Prostate gland (tissue), 2 donors: ENCODE measurements at regions of chr14 and their contacts with region 1.

Region 1: DNA sequence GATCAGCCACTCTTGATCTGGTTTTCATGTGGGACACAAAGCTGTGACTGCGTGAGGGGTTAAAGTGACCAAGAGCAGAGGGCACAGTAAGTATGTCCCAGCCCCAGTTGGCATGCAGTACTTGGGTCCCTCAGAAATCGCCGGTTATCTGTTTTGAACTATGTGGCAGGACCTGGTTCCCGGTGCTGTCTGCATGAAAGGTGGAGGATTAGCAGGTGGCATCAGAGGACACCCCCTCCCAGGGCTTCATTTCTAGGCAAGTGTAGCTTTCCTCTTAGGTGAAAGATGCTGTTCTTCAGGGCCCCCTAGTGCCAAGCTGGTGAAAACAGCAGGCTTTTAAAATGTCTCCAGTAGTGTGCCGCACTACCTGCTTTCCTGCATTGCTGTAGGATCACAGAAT is 57.1 kb downstream of the ATG14 start:
- DNase-seq: peak; percentile 65
- H3K4me3 ChIP-seq: no peak overlapping the region
- H3K27ac ChIP-seq: peak overlapping the region; percentile 4 to 36
- H3K4me1 ChIP-seq: no peaks in the 10 kb centered on the region
- H3K27me3 ChIP-seq: no peaks in the 10 kb centered on the region
- CTCF ChIP-seq: peak; percentile 35 to 84 (median 64)
- POLR2A ChIP-seq: no peak

Region 2: DNA sequence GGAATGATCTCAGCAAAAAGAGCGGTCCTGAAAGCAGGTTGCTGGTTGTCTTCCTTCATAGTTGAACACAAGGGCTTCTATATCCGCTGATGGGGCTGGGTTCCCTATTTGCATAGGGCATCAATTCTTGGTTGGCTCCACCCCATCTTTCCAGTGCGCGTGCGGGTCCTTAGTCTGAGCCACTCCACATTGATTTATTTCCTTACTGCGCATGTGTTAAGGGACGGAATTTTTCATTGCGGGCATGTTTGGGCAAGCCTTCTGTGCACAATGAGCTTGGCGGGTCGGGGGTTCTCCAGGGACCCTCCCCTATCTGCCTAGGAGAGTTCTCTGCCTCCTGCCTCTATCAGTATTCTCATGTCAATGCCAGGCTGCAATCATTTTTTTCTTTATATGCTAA is 141.9 kb before region 1 on chr14:
- intact Hi-C with region 1: loop called (anchors 5 kb)
- DNase-seq: no peak
- H3K4me3 ChIP-seq: no peak overlapping the region
- H3K27ac ChIP-seq: no peak overlapping the region
- H3K4me1 ChIP-seq: no peaks in the 10 kb centered on the region
- H3K27me3 ChIP-seq: no peaks in the 10 kb centered on the region
- CTCF ChIP-seq: no peak
- POLR2A ChIP-seq: no peak

Region 3: DNA sequence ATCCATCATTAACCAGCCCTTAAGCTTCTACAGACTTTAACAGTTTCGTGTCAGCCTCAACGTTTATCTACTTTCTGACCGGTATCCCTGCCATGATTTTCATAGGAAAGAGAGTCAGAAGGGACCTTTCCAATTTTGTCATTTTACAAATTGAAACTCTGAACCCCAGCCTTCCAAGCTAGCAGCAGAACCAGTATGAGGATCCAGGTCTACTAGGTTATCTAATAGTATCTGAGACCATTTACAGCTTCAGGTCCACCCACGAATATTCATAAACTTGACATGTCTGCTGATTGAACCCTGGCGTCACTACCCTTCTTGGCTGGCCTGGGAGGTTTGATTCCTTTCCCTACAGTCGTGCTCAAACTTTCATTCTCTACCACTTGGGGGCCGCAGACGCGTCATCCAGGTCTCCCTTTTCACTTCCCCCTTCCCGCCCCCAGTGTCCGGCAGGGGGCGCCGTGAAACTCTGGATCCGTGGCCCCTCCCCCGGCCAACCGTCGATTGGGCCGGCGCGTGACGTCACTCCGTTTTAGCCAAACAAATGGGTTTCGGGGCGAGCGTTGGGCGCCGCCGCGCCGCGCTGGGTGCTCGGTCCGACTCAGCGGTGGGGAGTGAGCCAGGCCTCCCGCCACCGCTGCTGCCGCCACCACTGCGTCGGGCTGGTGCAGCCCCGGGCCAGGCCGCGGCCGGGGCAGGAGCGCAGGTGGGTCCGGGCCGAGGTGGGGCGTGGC is 83.5 kb before region 1 on chr14 and contains the start of gene FBXO34:
- intact Hi-C with region 1: loop called (anchors 2 kb)
- DNase-seq: peak; percentile 99
- H3K4me3 ChIP-seq: peak within 1 kb of the TSS; percentile 96 to 97
- H3K27ac ChIP-seq: peak within 1 kb of the TSS; percentile 91 to 93
- H3K4me1 ChIP-seq: peaks cover 4% of the 10 kb centered on the region
- H3K27me3 ChIP-seq: no peaks in the 10 kb centered on the region
- CTCF ChIP-seq: peak; percentile 100
- POLR2A ChIP-seq: peak; percentile 97
- total RNA-seq, gene FBXO34: 37.8 to 73.3 TPM

Region 4: GRCh38 chr14:55477680-55478079 is 123.2 kb after region 1 on chr14:
- intact Hi-C with region 1: no loop called
- DNase-seq: no peak
- H3K4me3 ChIP-seq: no peak overlapping the region
- H3K27ac ChIP-seq: no peak overlapping the region
- H3K4me1 ChIP-seq: no peaks in the 10 kb centered on the region
- H3K27me3 ChIP-seq: no peaks in the 10 kb centered on the region
- CTCF ChIP-seq: no peak
- POLR2A ChIP-seq: no peak